Activated CD4-positive, alpha-beta memory T cell treated with anti-CD3 and anti-CD28 coated beads for 36 hours (primary cell): ENCODE measurements at regions of chr1 and their contacts with region 1.

Region 1: DNA sequence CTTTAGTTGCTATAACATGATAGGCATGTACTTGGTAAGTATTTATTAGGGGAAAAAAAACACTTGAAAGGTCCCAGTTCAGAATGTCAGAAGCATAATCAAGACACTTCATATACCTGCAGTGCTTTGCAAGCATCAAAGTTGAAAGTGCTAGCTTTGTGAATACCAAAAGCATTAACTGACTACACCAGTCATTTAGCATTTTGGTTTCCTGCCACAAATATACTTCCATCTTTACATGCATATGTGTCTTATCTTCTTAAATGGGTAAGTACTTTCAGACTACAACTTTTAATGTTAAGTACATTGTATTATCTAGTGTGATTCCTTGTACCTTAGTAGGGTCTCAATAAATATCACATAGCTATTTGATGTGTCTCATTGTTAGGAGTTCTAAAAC is 43.7 kb downstream of the AKT3 start:
- DNase-seq: no peak
- H3K4me3 Mint-ChIP-seq: no peak overlapping the region
- H3K27ac Mint-ChIP-seq: no peak overlapping the region
- H3K4me1 Mint-ChIP-seq: peaks cover 70% of the 10 kb centered on the region
- H3K27me3 Mint-ChIP-seq: no peaks in the 10 kb centered on the region

Region 2: GRCh38 chr1:243482141-243483022 is 323.9 kb before region 1 on chr1:
- CTCF ChIA-PET with region 1: no interaction called
- POLR2A ChIA-PET with region 1: no interaction called
- intact Hi-C with region 1: no loop called
- DNase-seq: peak; percentile 25
- H3K4me3 Mint-ChIP-seq: peak overlapping the region; percentile 50
- H3K27ac Mint-ChIP-seq: no peak overlapping the region
- H3K4me1 Mint-ChIP-seq: peaks cover 16% of the 10 kb centered on the region
- H3K27me3 Mint-ChIP-seq: no peaks in the 10 kb centered on the region

Region 3: GRCh38 chr1:243837907-243838535 is 31.7 kb after region 1 on chr1:
- CTCF ChIA-PET with region 1: no interaction called
- POLR2A ChIA-PET with region 1: no interaction called
- intact Hi-C with region 1: loop called (anchors 1 kb)
- DNase-seq: no peak
- H3K4me3 Mint-ChIP-seq: no peak overlapping the region
- H3K27ac Mint-ChIP-seq: peak overlapping the region; percentile 2
- H3K4me1 Mint-ChIP-seq: peaks cover 39% of the 10 kb centered on the region
- H3K27me3 Mint-ChIP-seq: no peaks in the 10 kb centered on the region